ENCODE measurements at regions of chr16 and their contacts with region 1.

Region 1: DNA sequence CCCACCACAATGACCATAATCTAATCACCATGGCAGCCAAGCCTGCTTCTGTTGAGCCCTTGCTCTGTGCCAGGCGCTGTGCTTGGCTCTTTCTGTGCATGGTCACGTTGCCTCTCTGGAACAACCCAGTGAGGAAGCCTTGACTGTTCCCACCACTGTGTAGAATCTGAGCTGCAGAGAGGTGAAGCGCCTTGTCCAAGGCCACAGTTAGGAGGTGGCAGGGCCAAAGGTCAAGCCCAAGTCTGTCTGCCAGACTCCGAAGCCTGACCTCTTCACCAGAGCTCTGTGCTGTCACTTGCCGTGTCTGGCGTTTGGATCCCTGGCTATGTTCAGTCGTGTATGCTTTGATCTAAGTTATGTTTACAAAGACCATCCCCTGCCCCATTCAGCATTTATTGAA is 10.5 kb downstream of the CLEC16A start:
- DNase-seq: no peak
- ATAC-seq: no peak
- H3K4me3 ChIP-seq: no peak overlapping the region
- H3K27ac ChIP-seq: no peak overlapping the region
- H3K4me1 ChIP-seq: 0 out of 3 replicates have a peak, but pooled peaks cover 3% of the 10 kb centered on the region
- CTCF ChIP-seq: no peak
- EP300 ChIP-seq: no peak
- POLR2A ChIP-seq: no peak
- RAD21 ChIP-seq: no peak

Region 2: GRCh38 chr16:10922328-10923145 is 32.4 kb before region 1 on chr16:
- CTCF ChIA-PET with region 1: no interaction called
- POLR2A ChIA-PET with region 1: no interaction called
- DNase-seq: no peak
- ATAC-seq: no peak
- H3K4me3 ChIP-seq: no peak overlapping the region
- H3K27ac ChIP-seq: no peak overlapping the region
- H3K4me1 ChIP-seq: no peaks in the 10 kb centered on the region
- CTCF ChIP-seq: no peak
- EP300 ChIP-seq: no peak
- POLR2A ChIP-seq: no peak
- RAD21 ChIP-seq: no peak

Region 3: GRCh38 chr16:10944249-10945064 is 10.4 kb before region 1 on chr16 and contains the start of gene CLEC16A:
- CTCF ChIA-PET with region 1: interaction called, 284 read pairs
- POLR2A ChIA-PET with region 1: no interaction called
- DNase-seq: peak; percentile 94 to 97
- ATAC-seq: peak; percentile 72 to 91
- H3K4me3 ChIP-seq: peak within 1 kb of the TSS; percentile 87
- H3K27ac ChIP-seq: peak within 1 kb of the TSS; percentile 80 to 90
- H3K4me1 ChIP-seq: peaks cover 36% of the 10 kb centered on the region
- CTCF ChIP-seq: no peak
- EP300 ChIP-seq: no peak
- POLR2A ChIP-seq: peak; percentile 82
- RAD21 ChIP-seq: no peak
- polyA plus RNA-seq, gene CLEC16A: 10.4 and 10.6 TPM in 2 replicates